IMR-90 (cell line): ENCODE measurements at regions of chr13 and their contacts with region 1.

Region 1: DNA sequence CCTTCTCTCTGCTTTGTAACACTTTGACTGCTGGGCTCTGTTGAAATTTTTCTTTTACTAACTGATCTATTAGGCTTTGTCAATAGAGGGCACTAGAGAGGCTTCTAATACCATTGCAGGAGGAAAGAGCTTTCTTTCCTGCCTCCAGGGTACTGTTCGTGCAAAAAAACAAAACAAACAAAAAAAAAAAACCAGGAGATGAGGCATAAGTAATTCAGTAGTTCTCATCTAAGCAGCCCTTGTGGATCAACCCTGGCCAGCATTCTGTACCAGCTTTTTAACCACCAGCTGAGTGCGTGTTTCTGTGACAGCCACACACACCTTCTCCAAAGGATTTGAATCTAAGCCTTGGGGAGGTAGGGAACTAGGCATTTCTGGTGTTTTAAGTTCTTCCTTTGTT is 1707.6 kb upstream of the SLC10A2 start:
- DNase-seq: peak; percentile 54
- ATAC-seq: peak; percentile 80; the same call in 1 of the 2 replicates
- H3K4me3 ChIP-seq: no peak overlapping the region
- H3K27ac ChIP-seq: no peak overlapping the region
- H3K4me1 ChIP-seq: no peaks in the 10 kb centered on the region
- H3K27me3 ChIP-seq: no peaks in the 10 kb centered on the region
- CTCF ChIP-seq: peak; percentile 63
- POLR2A ChIP-seq: no peak
- RAD21 ChIP-seq: peak; percentile 64

Region 2: GRCh38 chr13:104318121-104318520 is 455.7 kb before region 1 on chr13:
- CTCF ChIA-PET with region 1: interaction called, 3 read pairs
- POLR2A ChIA-PET with region 1: no interaction called
- dilution Hi-C with region 1: no loop called
- in situ Hi-C with region 1: no loop called
- intact Hi-C with region 1: loop called (anchors 5 kb)
- DNase-seq: peak; percentile 49
- ATAC-seq: peak; percentile 66
- H3K4me3 ChIP-seq: no peak overlapping the region
- H3K27ac ChIP-seq: no peak overlapping the region
- H3K4me1 ChIP-seq: peaks cover 2% of the 10 kb centered on the region; the same call in 1 of the 2 replicates
- H3K27me3 ChIP-seq: no peaks in the 10 kb centered on the region
- CTCF ChIP-seq: peak; percentile 58
- POLR2A ChIP-seq: no peak
- RAD21 ChIP-seq: peak; percentile 63

Region 3: DNA sequence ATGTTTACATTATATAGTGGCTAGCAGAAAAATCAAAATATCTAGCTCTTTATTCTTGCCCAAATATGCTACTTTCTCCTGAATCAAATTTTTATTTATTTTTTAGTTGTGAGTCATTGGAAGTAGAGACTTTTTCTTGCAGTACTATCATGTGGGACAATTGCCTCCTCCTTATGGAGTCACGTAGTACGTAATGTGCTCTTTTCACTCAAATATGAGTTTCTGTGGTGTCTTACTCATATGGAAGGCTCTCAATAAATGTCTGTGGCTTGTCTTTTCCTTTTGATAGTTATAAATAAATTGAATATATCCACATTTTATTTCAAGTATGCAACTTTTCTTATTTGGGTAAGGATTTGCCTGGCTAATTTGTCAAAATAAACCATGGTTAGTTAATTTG is 296.5 kb before region 1 on chr13:
- CTCF ChIA-PET with region 1: no interaction called
- POLR2A ChIA-PET with region 1: no interaction called
- dilution Hi-C with region 1: no loop called
- in situ Hi-C with region 1: no loop called
- intact Hi-C with region 1: no loop called
- DNase-seq: no peak
- ATAC-seq: no peak
- H3K4me3 ChIP-seq: no peak overlapping the region
- H3K27ac ChIP-seq: no peak overlapping the region
- H3K4me1 ChIP-seq: no peaks in the 10 kb centered on the region
- H3K27me3 ChIP-seq: no peaks in the 10 kb centered on the region
- CTCF ChIP-seq: no peak
- POLR2A ChIP-seq: no peak
- RAD21 ChIP-seq: no peak

Region 4: GRCh38 chr13:104571161-104571892 is 202.4 kb before region 1 on chr13:
- CTCF ChIA-PET with region 1: interaction called, 4 read pairs
- POLR2A ChIA-PET with region 1: no interaction called
- dilution Hi-C with region 1: no loop called
- in situ Hi-C with region 1: no loop called
- intact Hi-C with region 1: loop called (anchors 5 kb)
- DNase-seq: peak; percentile 82
- ATAC-seq: peak; percentile 99
- H3K4me3 ChIP-seq: no peak overlapping the region
- H3K27ac ChIP-seq: no peak overlapping the region
- H3K4me1 ChIP-seq: peaks cover 1% of the 10 kb centered on the region; the same call in 1 of the 2 replicates
- H3K27me3 ChIP-seq: no peaks in the 10 kb centered on the region
- CTCF ChIP-seq: peak; percentile 73
- POLR2A ChIP-seq: no peak
- RAD21 ChIP-seq: peak; percentile 76

Region 5: DNA sequence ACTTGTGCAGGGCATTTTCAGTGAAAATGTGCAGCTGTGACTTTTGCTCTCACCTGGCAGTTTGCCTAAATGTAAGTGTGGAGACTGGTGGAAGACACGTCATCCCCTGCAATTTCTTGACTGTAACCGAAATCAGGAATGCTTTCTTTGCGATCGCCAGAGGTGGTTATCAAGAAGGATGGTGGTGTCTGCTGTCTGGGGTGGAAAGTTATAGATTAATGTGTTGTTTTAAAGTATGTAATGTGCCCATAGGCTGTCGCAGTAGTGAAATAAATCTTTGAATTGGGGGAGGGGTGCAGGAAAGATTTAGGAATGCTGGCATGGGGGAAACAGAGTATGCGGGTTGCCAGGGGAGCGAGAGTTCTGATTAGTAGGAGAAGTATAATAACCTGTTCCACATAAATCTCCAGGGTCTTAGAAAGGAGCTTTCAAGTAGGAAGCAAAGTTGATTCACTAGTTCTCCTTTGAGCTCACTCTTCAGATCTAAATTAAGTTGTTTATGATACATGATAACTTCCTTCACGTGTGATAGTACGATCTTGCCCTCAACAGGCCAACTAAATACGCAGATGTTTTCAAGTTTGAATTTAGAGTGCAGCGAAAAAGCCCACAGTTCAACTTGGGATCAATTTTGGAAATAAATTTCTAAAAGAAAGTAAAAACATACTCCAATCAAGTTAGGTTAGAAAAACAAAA is 187.6 kb before region 1 on chr13:
- CTCF ChIA-PET with region 1: no interaction called
- POLR2A ChIA-PET with region 1: no interaction called
- dilution Hi-C with region 1: no loop called
- in situ Hi-C with region 1: no loop called
- intact Hi-C with region 1: no loop called
- DNase-seq: peak; percentile 87
- ATAC-seq: peak; percentile 77
- H3K4me3 ChIP-seq: no peak overlapping the region
- H3K27ac ChIP-seq: no peak overlapping the region
- H3K4me1 ChIP-seq: no peaks in the 10 kb centered on the region
- H3K27me3 ChIP-seq: no peaks in the 10 kb centered on the region
- CTCF ChIP-seq: no peak
- POLR2A ChIP-seq: no peak
- RAD21 ChIP-seq: no peak

Region 6: GRCh38 chr13:104650431-104650830 is 123.3 kb before region 1 on chr13:
- CTCF ChIA-PET with region 1: no interaction called
- POLR2A ChIA-PET with region 1: no interaction called
- dilution Hi-C with region 1: no loop called
- in situ Hi-C with region 1: no loop called
- intact Hi-C with region 1: no loop called
- DNase-seq: no peak
- ATAC-seq: no peak
- H3K4me3 ChIP-seq: no peak overlapping the region
- H3K27ac ChIP-seq: no peak overlapping the region
- H3K4me1 ChIP-seq: no peaks in the 10 kb centered on the region
- H3K27me3 ChIP-seq: no peaks in the 10 kb centered on the region
- CTCF ChIP-seq: no peak
- POLR2A ChIP-seq: no peak
- RAD21 ChIP-seq: no peak

Region 7: GRCh38 chr13:105202354-105202753 is 428.6 kb after region 1 on chr13:
- CTCF ChIA-PET with region 1: interaction called, 3 read pairs
- POLR2A ChIA-PET with region 1: no interaction called
- dilution Hi-C with region 1: no loop called
- in situ Hi-C with region 1: no loop called
- intact Hi-C with region 1: loop called (anchors 5 kb)
- DNase-seq: peak; percentile 47
- ATAC-seq: peak; percentile 85
- H3K4me3 ChIP-seq: no peak overlapping the region
- H3K27ac ChIP-seq: no peak overlapping the region
- H3K4me1 ChIP-seq: no peaks in the 10 kb centered on the region
- H3K27me3 ChIP-seq: no peaks in the 10 kb centered on the region
- CTCF ChIP-seq: peak; percentile 54
- POLR2A ChIP-seq: no peak
- RAD21 ChIP-seq: peak; percentile 52